Astrocyte of the cerebellum (primary cell): ENCODE measurements at regions of chr5 and their contacts with region 1.

Region 1: GRCh38 chr5:176803940-176804498 is 6.3 kb upstream of the UNC5A start:
- DNase-seq: peak; percentile 15
- H3K4me3 ChIP-seq: no peak overlapping the region
- CTCF ChIP-seq: no peak

Region 2: DNA sequence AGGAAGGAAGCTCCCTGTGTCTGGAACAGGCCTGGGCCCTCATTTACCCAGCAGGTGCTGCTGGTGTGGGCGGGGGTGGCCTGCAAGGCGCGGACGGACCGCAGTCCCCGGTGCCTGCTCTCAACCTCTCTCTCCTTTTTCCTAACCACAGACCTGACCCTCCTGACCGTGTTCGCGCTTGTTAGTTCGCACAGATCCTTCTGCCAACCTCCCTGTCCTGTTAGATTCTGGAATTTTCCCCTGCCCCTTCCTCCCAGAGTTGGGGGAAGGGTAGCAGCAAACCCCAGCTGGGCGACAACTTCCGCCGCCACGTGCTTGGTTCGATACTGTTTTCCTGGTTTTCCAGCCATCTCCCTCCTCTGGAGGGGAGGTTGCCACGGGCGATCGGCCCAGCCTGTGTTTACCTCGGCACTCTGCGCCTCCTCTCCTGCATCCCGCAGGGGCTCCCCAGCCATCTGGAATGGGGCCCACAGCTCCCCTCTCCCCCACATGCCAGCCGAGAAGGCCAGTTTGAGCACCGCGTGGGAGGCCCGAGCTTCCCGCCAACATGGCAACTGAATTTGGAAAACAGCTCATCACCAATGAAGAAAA is 64.5 kb before region 1 on chr5:
- in situ Hi-C with region 1: loop called (anchors 5 kb)
- DNase-seq: no peak
- H3K4me3 ChIP-seq: no peak overlapping the region
- CTCF ChIP-seq: no peak

Region 3: DNA sequence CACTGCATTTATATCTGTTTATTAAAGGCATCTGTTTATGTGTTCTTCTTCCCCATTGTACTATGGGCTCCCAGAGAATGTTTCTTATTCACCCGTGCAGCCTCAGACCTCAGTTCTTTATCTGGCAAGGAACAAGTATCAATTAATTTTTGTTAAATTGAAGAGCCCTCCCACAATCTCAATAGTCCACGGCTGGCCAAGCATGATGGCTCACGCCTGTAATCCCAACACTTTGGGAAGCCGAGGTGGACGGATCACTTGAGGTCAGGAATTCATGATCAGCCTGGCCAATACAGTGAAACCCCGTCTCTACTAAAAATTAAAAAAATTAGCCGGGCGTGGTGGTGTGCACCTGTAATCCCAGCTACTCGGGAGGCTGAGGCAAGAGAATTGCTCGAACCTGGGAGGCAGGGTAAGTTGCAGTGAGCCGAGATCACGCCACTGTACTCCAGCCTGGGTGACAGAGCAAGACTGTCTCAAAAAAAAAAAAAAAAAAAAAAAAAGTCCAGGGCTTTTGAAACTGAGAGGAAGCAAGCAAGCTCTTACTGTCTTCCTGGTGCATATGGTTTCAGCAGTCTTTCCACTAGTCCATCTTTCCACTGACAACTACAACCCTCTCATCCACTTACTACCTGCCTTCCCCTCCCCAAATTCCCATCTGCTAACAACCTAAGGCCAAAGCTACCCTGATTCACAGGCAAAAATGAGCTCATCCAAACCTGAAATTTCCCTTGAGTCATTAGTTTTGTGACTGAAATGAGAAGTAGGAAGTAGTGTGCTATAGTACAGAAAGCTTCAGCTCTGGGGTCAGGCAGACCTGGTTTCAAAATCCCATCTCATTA is 97.5 kb after region 1 on chr5:
- in situ Hi-C with region 1: loop called (anchors 5 kb)
- DNase-seq: no peak
- H3K4me3 ChIP-seq: no peak overlapping the region
- CTCF ChIP-seq: no peak